Aorta (tissue), 5 donors: ENCODE measurements at regions of chr9 and their contacts with region 1.

Region 1: DNA sequence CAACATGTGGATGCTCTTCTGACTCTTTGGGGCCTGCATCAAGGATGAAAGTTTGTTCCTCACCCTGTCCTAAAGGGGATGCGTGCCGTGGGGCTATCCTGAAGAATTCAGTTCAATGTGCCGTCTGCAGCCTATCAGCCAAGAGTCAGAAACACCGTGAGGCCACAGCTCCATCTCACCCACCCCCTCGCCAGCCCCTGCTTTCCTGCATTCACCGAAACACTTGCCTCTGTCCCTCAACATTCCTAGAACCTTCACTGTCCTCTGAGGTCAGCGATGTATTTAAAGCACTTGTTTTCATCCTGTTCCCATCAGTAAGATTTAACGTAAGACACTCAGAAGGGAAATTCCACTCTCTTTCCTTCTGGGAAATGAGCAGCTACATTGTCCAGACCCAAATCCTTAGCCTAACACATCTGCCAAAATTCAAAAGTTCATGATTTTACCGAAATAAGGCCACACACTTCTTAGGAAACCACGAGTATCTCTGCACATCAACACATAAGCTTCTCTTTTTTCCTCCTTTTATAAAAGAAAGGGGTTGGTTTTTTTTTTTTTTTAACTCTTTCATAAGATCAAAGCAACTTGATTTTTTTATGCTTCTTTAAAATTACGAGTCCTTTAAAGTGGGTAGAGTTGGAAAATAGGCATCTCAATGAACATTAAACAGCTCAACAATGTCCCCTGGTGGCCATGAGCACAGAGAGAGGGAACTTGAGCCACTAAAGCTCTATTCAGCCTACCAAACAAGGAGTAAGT is 100.7 kb downstream of the SUSD1 start:
- DNase-seq: peak in 1 of 2 donors; percentile 72
- ATAC-seq: peak; percentile 91
- H3K4me3 ChIP-seq: no peak overlapping the region
- H3K27ac ChIP-seq: no peak overlapping the region
- H3K4me1 ChIP-seq: no peaks in the 10 kb centered on the region
- H3K27me3 ChIP-seq: no peaks in the 10 kb centered on the region

Region 2: DNA sequence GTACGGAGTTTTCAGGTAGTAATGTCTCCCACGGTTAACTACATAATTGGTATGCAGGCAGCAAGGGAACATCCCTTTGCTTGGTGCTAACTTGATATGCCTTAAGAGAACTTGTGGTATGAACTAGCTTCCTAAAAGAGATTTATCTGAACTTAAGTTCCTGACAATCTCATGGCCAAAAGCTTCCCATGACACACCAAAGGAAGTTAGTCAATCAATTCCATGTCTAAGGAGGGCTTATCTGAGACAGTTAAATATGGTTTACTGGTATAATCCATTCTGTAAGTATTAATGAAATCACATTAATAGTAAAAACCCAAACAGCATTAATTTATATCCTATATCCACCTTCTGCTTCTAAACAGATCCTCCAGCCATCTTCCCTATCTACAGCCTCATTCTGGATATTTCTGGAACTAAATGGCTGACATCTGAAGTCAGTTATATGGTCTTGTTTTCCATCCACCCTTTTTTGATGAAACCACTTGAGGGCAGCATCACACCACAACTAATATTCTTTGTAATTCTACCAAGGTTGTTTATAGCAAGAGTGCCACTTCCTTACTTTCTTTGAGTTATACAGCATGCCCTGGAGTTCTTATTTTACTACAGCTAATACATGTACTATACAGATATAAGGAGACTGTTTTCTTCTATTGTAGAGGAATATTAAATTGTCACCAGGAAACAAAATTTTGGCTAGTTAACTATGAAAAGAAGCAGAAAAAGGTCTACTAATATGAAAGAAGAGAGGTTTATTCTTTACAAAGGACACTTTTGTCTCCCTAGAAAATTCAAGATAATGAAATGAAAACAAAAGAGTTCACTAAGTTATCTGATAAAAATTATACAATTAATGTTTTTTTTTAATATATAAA is 314.4 kb before region 1 on chr9:
- intact Hi-C with region 1: loop called (anchors 1 to 2 kb)
- DNase-seq: no peak
- ATAC-seq: peak; percentile 78
- H3K4me3 ChIP-seq: no peak overlapping the region
- H3K27ac ChIP-seq: no peak overlapping the region
- H3K4me1 ChIP-seq: no peaks in the 10 kb centered on the region
- H3K27me3 ChIP-seq: no peaks in the 10 kb centered on the region

Region 3: DNA sequence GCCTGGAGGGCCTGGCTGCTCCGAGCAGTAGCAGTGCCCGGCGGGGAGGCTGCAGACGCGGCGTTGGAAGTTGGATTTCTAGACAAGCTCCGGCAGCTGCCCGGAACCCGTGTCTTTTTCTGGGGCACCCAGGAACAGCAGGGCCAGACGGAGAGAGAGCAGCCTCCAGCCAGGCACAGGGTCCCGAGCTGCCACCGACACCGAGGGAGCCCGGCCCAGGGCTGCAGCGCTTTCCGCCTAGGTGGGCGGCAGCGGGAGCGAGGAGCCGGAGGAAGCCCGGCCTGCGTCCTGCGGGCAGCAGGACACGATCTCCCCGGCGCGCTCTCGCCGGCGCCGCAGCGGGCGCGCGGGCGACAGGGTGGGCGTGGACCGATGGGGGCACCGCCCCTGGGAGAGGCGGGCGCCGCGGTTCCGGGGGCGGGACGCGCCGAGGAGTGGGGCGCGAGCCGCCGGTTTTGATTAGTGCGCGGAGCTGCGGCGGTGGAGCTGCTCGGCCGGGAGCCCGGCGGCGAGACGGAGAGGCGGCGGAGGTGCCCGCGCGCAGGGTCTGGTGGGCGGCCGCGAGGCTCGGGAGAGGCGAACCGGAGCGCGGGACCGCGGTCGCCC is 178.0 kb before region 1 on chr9 and contains the start of gene UGCG:
- intact Hi-C with region 1: loop called in 1 of 2 experiments (anchors 5 kb)
- DNase-seq: peak; percentile 93 to 96
- ATAC-seq: peak; percentile 98
- H3K4me3 ChIP-seq: peak within 1 kb of the TSS; percentile 43 to 76
- H3K27ac ChIP-seq: peak within 1 kb of the TSS; percentile 38 to 79
- H3K4me1 ChIP-seq: peaks cover 3% of the 10 kb centered on the region in 2 donors
- H3K27me3 ChIP-seq: no peaks in the 10 kb centered on the region
- total RNA-seq, gene UGCG: 36.6 to 51.2 TPM